Esophagus muscularis mucosa (tissue), 4 donors: ENCODE measurements at regions of chr11 and their contacts with region 1.

Region 1: GRCh38 chr11:61384271-61385242 is 7.8 kb upstream of the TMEM216 start:
- DNase-seq: no peak
- H3K4me3 ChIP-seq: no peak overlapping the region
- H3K27ac ChIP-seq: no peak overlapping the region
- H3K4me1 ChIP-seq: peaks cover 0 to 9% (median 5%) of the 10 kb centered on the region in 4 donors
- H3K27me3 ChIP-seq: no peaks in the 10 kb centered on the region
- CTCF ChIP-seq: no peak
- EP300 ChIP-seq: no peak
- POLR2A ChIP-seq: no peak

Region 2: GRCh38 chr11:61007591-61008478 is 376.7 kb before region 1 on chr11:
- intact Hi-C with region 1: no loop called
- DNase-seq: no peak
- H3K4me3 ChIP-seq: peak overlapping the region; percentile 43 to 54 (median 51)
- H3K27ac ChIP-seq: no peak overlapping the region
- H3K4me1 ChIP-seq: peaks cover 12 to 26% (median 22%) of the 10 kb centered on the region in 4 donors
- H3K27me3 ChIP-seq: peaks cover 0 to 21% (median 7%) of the 10 kb centered on the region in 4 donors
- CTCF ChIP-seq: no peak
- EP300 ChIP-seq: no peak
- POLR2A ChIP-seq: no peak

Region 3: GRCh38 chr11:61254403-61255025 is 130.0 kb before region 1 on chr11:
- intact Hi-C with region 1: loop called (anchors 10 kb)
- DNase-seq: no peak
- H3K4me3 ChIP-seq: no peak overlapping the region
- H3K27ac ChIP-seq: no peak overlapping the region
- H3K4me1 ChIP-seq: no peaks in the 10 kb centered on the region
- H3K27me3 ChIP-seq: no peaks in the 10 kb centered on the region
- CTCF ChIP-seq: peak; percentile 50 to 81 (median 53)
- EP300 ChIP-seq: no peak
- POLR2A ChIP-seq: no peak

Region 4: GRCh38 chr11:61336171-61336922 is 48.2 kb before region 1 on chr11:
- intact Hi-C with region 1: loop called (anchors 1 kb)
- DNase-seq: peak; percentile 93
- H3K4me3 ChIP-seq: no peak overlapping the region
- H3K27ac ChIP-seq: peak overlapping the region; percentile 34 to 51 (median 44)
- H3K4me1 ChIP-seq: peaks cover 20 to 42% (median 25%) of the 10 kb centered on the region in 4 donors
- H3K27me3 ChIP-seq: no peaks in the 10 kb centered on the region
- CTCF ChIP-seq: peak; percentile 97 to 98 (median 97)
- EP300 ChIP-seq: no peak
- POLR2A ChIP-seq: no peak